ENCODE measurements at regions of chr1 and their contacts with region 1.

Region 1: GRCh38 chr1:110019770-110020169 is 14.7 kb upstream of the STRIP1 start:
- DNase-seq: no peak
- H3K4me3 ChIP-seq: no peak overlapping the region
- CTCF ChIP-seq: no peak

Region 2: DNA sequence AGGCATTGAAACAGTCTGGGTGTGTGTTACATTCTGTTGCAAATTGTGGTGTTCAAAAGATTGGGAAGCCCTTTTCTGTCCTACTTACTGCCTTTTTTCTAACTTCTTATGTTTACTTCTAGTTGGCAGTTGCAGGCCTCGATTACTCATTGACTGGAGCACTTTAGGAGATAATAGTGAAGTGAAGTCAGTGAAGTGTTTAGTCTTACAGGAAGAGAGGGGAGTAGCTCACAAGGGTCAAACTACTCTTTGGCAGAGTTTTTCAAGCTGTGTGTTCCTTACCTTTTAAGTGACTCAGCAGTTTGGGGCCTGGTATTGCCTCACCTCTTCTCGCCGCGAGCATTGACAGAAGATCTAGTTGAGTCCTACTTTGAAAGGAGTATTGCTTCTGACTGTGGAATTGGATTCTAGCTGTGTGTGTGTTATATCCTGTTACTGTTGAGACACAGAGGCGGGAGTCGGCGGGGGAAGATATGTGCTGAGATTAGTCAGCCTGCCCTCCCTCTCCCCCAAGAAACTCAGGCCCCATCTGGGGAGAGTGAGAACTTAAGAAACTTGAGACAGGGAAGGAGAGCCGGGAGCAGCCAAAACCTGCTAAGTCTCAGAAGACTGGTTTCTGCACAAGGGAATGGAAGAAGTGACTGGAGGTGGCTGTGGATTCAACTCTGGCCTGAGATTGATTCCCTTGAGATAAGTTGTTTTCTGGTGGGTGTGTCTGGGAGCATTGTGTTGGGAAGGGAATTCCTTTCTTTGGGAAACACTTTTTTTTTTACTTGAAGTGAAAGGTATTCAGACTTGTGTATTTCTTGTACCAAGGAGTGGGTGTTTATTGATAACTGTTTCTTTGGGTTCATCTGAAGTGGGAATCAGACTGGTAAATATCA is 15.8 kb before region 1 on chr1:
- CTCF ChIA-PET with region 1: interaction called, 11 read pairs
- POLR2A ChIA-PET with region 1: no interaction called
- DNase-seq: peak; percentile 93
- H3K4me3 ChIP-seq: peak overlapping the region; percentile 48
- CTCF ChIP-seq: no peak

Region 3: DNA sequence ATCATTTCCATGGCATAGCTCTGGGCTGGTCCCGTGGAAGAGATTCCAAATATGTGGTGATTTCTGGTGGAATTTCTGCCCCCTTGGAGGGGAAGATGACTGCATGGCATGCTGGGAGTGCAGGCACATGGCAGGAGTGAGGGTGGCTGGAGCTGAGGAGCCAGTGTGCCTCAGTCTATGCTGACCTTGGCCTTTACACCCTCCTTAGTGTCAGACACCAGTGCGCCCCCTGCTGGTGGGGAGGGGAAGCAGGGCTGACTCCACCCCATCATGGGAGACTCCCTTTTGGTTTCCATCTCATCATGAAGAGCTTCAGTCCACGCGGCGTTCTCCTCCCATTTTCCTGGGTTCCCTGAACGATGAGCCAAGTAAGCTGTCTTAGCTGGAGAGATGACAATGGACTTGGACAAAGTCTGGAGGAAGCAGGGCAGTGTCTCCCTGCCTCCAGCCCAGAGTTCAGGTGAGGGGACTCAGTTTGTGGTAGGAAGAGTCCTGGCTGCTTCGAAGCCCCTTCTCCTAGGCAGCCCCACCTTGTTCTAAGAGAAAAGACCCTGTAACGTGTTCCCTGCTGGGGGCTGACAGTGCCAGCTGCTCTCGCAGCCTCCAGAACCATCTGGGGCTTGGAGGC is 40.4 kb after region 1 on chr1:
- CTCF ChIA-PET with region 1: no interaction called
- POLR2A ChIA-PET with region 1: no interaction called
- DNase-seq: no peak
- H3K4me3 ChIP-seq: no peak overlapping the region
- CTCF ChIP-seq: peak; percentile 80

Measured in AG04449 (cell line).